Pancreas (tissue), 10 donors: ENCODE measurements at regions of chr13 and their contacts with region 1.

Region 1: GRCh38 chr13:105565136-105565727 is 970.2 kb downstream of the EFNB2 start:
- DNase-seq: no peak
- ATAC-seq: no peak
- H3K4me3 ChIP-seq: no peak overlapping the region
- H3K27ac ChIP-seq: no peak overlapping the region
- H3K4me1 ChIP-seq: no peaks in the 10 kb centered on the region
- H3K27me3 ChIP-seq: no peaks in the 10 kb centered on the region
- CTCF ChIP-seq: no peak

Region 2: GRCh38 chr13:106322628-106323027 is 757.4 kb after region 1 on chr13:
- intact Hi-C with region 1: loop called in 1 of 3 experiments (anchors 5 kb)
- DNase-seq: no peak
- ATAC-seq: no peak
- H3K4me3 ChIP-seq: no peak overlapping the region
- H3K27ac ChIP-seq: no peak overlapping the region
- H3K4me1 ChIP-seq: no peaks in the 10 kb centered on the region
- H3K27me3 ChIP-seq: no peaks in the 10 kb centered on the region
- CTCF ChIP-seq: no peak